ENCODE measurements at regions of chr3 and their contacts with region 1.

Region 1: DNA sequence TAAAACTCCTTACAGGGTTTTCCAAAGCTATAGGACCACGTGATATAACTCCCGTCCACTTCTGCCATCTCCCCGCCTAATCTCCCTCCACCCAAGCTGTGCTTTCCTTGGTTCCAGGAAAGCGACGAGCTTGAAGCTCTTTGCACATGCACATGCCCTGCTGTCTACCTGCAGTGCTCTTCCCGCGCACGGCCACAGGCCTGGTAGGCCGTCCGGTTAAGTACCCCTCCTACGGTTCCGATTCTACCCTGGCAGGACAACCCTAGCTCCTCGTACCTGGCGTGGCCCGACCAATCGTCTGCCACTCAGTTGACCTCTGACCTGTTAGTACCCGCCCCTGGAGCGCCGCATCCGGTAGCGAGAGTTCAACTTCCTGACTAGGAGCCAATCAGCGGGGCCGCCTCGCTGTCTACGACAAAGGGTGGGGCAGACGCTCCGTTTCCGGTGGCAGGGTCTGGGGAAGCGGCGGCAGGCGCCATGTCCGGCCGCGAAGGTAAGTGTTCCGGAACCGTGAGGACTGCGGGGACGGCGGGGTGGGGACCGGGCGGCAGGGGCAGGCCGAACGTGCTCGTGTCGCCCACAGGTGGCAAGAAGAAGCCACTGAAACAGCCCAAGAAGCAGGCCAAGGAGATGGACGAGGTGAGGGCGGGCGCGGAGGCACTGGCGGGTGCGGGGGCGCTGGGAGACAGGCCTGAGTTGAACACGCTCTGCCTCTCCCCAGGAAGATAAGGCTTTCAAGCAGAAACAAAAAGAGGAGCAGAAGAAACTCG is at the starts of genes CCDC51 and TMA7:
- DNase-seq: peak; percentile 99
- ATAC-seq: peak; percentile 97
- H3K4me3 Mint-ChIP-seq: peak within 1 kb of the TSS; percentile 92
- H3K27ac Mint-ChIP-seq: peak within 1 kb of the TSS; percentile 98
- H3K4me1 Mint-ChIP-seq: peaks cover 29% of the 10 kb centered on the region
- H3K27me3 Mint-ChIP-seq: no peaks in the 10 kb centered on the region
- total RNA-seq, gene CCDC51: 17.5 to 25.0 TPM
- total RNA-seq, gene TMA7: 260 to 324 TPM

Region 2: DNA sequence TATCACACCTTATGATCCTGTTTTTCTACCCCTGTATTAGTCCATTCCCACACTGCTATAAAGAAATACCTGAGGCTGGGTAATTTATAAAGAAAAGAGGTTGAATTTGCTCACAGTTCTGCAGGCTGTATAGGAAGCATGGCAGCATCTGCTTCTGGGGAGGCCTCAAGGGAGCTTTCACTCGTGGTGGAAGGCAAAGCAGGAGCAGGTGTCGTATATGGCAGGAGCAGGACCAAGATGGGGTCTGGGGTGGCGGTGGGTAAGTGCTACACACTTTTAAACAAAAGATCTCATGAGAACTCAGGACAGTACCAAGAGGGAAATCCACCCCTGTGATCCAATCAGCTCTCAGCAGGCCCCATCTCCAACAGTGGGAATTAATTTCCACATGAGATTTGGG is 948.8 kb before region 1 on chr3:
- CTCF ChIA-PET with region 1: no interaction called
- POLR2A ChIA-PET with region 1: no interaction called
- intact Hi-C with region 1: no loop called
- DNase-seq: no peak
- ATAC-seq: no peak
- H3K4me3 Mint-ChIP-seq: no peak overlapping the region
- H3K27ac Mint-ChIP-seq: no peak overlapping the region
- H3K4me1 Mint-ChIP-seq: no peaks in the 10 kb centered on the region
- H3K27me3 Mint-ChIP-seq: no peaks in the 10 kb centered on the region

Region 3: DNA sequence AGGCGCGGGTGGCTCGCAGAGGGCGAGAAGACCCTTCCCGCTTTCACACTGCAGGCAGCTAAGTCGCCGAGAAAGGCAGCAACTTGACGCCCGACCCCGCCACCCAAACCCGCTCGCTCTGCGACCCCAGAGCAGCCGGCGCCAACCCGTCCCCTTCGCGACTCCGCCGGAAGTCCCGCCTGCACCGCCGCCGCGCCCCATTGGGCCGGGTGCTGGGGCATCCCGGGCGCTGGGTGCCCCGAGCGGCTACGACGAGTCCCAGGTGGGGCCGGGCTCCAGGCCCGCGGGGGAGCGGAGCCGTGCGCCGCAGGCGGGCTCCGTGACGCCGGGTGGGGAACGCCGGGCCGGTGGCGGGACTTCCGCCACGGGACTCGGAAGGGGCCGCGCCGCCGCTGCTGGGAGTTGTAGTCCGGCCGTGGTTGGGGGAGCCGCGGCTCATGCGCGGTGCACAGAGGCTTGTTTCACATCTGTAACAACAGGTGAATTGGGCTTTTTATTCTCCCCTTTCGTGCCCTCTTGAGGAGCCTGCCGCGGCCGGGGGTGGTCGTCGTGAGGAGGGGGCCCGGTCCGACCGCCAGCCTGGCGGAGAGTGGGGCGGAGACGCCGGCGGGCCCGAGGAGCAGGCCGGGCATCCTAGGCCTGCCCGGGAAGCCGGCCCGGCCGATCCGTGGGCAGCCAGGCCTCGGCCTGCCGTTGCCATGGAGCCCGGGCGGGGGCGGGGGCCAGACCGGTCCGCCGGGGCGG is 637.1 kb before region 1 on chr3 and contains the start of gene DHX30:
- CTCF ChIA-PET with region 1: no interaction called
- POLR2A ChIA-PET with region 1: no interaction called
- intact Hi-C with region 1: loop called in 1 of 2 experiments (anchors 2 kb)
- DNase-seq: peak; percentile 93
- ATAC-seq: peak; percentile 92
- H3K4me3 Mint-ChIP-seq: peak within 1 kb of the TSS; percentile 96
- H3K27ac Mint-ChIP-seq: peak within 1 kb of the TSS; percentile 98
- H3K4me1 Mint-ChIP-seq: peaks cover 24% of the 10 kb centered on the region
- H3K27me3 Mint-ChIP-seq: no peaks in the 10 kb centered on the region
- total RNA-seq, gene DHX30: 81.6 to 82.3 TPM

Region 4: DNA sequence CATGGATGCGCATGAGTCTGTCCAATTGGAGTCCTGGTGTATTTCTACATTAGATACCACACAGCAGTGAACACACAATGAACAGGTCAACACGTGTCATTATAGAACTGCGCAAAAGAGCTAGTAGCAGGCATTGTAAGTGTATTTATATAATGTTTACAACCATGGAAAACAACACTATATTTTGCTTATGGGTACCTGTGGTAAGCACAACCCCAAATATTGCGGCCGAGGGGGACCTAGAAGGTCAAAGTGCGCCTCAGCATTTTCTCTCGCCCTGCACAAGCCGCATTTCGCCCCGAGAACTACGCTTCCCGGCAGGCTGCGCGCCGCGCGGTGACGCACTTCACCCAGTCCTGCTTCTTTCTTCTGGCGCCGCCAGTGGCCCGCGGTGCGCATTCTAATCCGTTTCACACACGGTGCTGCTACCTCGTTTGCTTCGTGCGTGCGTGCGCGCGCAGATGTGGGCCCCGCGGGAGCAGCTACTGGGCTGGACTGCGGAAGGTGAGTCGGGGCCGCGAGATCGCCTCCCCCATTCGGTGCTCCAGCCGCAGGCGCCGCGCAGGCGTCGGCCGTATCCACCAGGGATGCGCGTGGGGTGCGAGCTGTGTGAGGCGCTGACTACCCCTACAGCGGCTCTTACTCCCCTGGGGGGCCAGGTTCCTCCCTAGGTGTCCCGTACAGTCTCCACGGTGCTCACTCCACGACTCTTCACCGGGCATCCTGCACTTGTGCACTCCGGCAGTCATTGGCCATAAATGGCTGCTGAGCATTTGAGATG is 199.1 kb before region 1 on chr3 and contains the start of gene ZNF589:
- CTCF ChIA-PET with region 1: interaction called, 56 read pairs
- POLR2A ChIA-PET with region 1: no interaction called
- intact Hi-C with region 1: loop called in 1 of 2 experiments (anchors 1 kb)
- DNase-seq: peak; percentile 97
- ATAC-seq: peak; percentile 99
- H3K4me3 Mint-ChIP-seq: peak within 1 kb of the TSS; percentile 87
- H3K27ac Mint-ChIP-seq: peak within 1 kb of the TSS; percentile 84
- H3K4me1 Mint-ChIP-seq: peaks cover 26% of the 10 kb centered on the region
- H3K27me3 Mint-ChIP-seq: no peaks in the 10 kb centered on the region
- total RNA-seq, gene ZNF589: 28.6 to 29.6 TPM

Region 5: GRCh38 chr3:48388966-48389365 is 51.0 kb before region 1 on chr3:
- CTCF ChIA-PET with region 1: interaction called, 10 read pairs
- POLR2A ChIA-PET with region 1: no interaction called
- intact Hi-C with region 1: no loop called
- DNase-seq: no peak
- ATAC-seq: no peak
- H3K4me3 Mint-ChIP-seq: no peak overlapping the region
- H3K27ac Mint-ChIP-seq: no peak overlapping the region
- H3K4me1 Mint-ChIP-seq: no peaks in the 10 kb centered on the region
- H3K27me3 Mint-ChIP-seq: peaks cover 12% of the 10 kb centered on the region

Region 6: GRCh38 chr3:48422270-48422669 is 17.7 kb before region 1 on chr3:
- CTCF ChIA-PET with region 1: interaction called, 19 read pairs
- POLR2A ChIA-PET with region 1: interaction called, 3 read pairs
- intact Hi-C with region 1: no loop called
- DNase-seq: no peak
- ATAC-seq: no peak
- H3K4me3 Mint-ChIP-seq: no peak overlapping the region
- H3K27ac Mint-ChIP-seq: no peak overlapping the region
- H3K4me1 Mint-ChIP-seq: no peaks in the 10 kb centered on the region
- H3K27me3 Mint-ChIP-seq: no peaks in the 10 kb centered on the region

Region 7: GRCh38 chr3:48472915-48473616 is 33.1 kb after region 1 on chr3:
- CTCF ChIA-PET with region 1: interaction called, 24 read pairs
- POLR2A ChIA-PET with region 1: interaction called, 8 read pairs
- intact Hi-C with region 1: loop called in 1 of 2 experiments (anchors 1 kb)
- DNase-seq: peak; percentile 99
- ATAC-seq: peak; percentile 90
- H3K4me3 Mint-ChIP-seq: peak overlapping the region; percentile 74
- H3K27ac Mint-ChIP-seq: peak overlapping the region; percentile 93
- H3K4me1 Mint-ChIP-seq: peaks cover 49% of the 10 kb centered on the region
- H3K27me3 Mint-ChIP-seq: no peaks in the 10 kb centered on the region

Region 8: DNA sequence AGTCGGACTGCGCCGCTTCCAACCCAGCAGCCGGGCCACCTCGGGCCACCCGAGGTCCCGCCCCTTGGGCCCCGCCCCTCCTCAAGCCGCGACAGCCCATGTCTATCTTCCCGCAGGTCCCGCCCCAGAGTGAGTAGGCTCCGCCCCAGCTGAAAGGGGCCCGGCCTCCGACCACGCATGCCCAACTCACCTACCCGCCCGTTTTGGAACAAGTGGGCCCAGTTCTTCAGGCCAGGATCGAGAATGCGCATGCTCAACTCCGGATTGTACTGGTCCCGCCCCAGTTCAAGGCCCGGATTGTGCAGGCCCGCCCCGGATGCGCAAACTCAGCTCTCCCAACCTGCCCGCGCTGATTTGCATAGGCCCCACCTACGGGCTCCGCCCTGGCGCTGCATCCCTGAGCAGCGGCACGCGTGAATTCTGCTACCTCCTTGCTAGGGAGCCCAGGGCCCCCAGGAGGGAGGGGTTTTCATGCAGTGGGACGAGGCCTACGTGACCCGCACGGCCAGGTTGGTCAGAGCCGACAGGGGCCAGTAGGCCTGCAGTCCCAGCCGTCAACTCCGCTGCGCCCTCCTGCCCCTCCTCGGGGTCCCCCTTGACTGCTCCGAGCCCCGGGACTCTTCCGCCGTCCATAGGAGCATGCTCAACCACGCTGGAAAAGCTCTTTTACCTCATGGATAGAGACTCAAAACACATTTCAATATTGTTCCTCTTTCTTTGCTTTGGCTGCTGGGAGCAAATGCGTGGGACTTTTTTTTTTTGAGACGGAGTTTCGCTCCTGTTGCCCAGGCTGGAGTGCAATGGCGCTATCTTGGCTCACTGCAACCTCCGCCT is 117.0 kb after region 1 on chr3 and contains the start of gene PFKFB4:
- CTCF ChIA-PET with region 1: interaction called, 43 read pairs
- POLR2A ChIA-PET with region 1: interaction called, 4 read pairs
- intact Hi-C with region 1: loop called (anchors 1 to 2 kb)
- DNase-seq: peak; percentile 100
- ATAC-seq: peak; percentile 91
- H3K4me3 Mint-ChIP-seq: peak within 1 kb of the TSS; percentile 87
- H3K27ac Mint-ChIP-seq: peak within 1 kb of the TSS; percentile 93
- H3K4me1 Mint-ChIP-seq: peaks cover 23% of the 10 kb centered on the region
- H3K27me3 Mint-ChIP-seq: no peaks in the 10 kb centered on the region
- total RNA-seq, gene PFKFB4: 58.4 to 63.7 TPM

Region 9: DNA sequence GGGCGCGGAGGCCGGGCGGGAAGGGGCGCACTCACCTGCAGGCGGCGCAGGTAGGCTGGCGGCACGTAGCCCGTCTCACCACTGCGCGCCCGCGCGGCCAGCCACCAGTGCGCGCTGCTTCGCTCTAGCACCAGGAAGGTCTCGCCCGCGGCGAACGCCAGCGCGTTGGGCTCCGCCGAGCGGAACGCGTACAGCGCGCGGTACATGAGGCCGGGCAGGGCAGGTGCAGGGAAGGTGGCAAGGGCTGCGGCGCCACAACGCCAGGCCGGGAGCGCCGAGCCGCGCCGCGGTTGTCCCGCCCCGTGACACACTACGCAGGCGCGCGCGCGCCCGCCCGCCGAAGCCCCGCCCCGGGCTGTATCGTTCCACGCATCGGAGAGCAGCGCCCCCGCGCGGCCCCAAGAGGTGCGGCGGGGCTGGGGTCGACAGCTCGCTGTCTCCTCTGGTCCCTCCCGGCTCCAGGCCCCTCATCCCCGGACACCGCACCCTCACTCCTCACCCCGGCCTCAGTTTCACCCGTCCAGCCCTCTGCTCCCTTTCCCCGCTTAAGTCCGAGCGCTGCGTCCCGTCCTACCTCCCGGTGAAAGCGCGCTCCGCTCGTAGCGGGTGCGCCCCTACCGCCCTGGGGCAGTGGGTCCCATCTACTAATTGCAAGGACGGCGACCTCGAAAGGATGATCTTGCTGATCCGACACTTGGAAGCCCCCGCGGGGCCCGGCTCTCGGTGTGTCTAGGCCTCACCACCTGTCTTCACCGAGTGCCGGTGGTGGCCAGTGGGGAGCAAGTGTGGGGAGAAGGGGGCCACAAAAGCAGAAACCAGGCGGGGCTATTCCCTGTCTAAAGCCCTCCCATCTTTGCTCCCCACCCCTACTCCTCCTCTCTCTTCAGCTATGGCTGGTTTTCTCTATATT is 245.9 kb after region 1 on chr3 and contains the start of gene NCKIPSD:
- CTCF ChIA-PET with region 1: no interaction called
- POLR2A ChIA-PET with region 1: no interaction called
- intact Hi-C with region 1: no loop called
- DNase-seq: peak; percentile 96
- ATAC-seq: peak; percentile 94
- H3K4me3 Mint-ChIP-seq: peak within 1 kb of the TSS; percentile 82
- H3K27ac Mint-ChIP-seq: peak within 1 kb of the TSS; percentile 68
- H3K4me1 Mint-ChIP-seq: peaks cover 16% of the 10 kb centered on the region
- H3K27me3 Mint-ChIP-seq: no peaks in the 10 kb centered on the region
- total RNA-seq, gene NCKIPSD: 61.0 to 67.3 TPM